ENCODE measurements at regions of chr10 and their contacts with region 1.

Region 1: DNA sequence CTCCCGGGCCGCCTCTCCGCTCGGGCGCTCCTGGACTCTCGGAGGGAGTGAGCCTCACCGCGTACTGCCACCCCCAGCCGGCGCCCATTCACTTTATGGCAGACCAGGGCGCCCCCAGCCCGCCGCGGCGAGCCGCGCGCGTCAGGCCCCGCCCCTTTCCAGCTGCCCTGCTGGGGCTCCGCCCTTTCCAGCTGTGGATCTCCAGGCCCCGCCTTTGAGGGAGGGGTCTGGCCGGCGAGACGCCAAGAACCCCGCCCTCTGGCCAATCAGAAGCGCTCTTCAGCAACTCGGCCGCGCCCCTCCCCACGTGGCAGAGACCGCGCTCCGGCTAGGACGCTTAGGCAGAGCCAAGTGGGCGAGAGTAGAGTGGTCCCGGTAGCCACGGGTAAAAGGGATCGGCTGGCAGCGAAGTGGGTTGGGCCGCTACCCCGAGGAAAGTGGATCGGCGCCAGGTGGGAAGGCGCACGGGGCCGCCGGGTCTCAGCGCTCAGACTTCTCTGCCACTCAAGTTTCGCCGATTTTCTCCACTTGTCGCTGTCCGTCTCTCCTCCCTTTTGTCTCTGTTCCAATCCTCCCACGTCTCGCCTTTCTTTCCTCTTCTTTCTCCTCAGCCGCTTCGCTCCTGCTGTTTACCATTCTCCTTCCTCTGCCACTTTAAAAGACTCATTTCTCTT is at the start of gene PITX3:
- DNase-seq: peak; percentile 96
- H3K4me3 ChIP-seq: peak within 1 kb of the TSS; percentile 31 to 63 (median 54)
- H3K27ac ChIP-seq: peak within 1 kb of the TSS in 2 of 4 donors; percentile 18 to 38
- H3K4me1 ChIP-seq: peaks cover 0 to 37% (median 35%) of the 10 kb centered on the region in 4 donors
- H3K27me3 ChIP-seq: peaks cover 0 to 8% (median 0%) of the 10 kb centered on the region in 3 donors
- CTCF ChIP-seq: no peak
- EP300 ChIP-seq: no peak
- POLR2A ChIP-seq: no peak
- total RNA-seq, gene PITX3: not detected

Region 2: GRCh38 chr10:102358712-102359382 is 117.3 kb after region 1 on chr10:
- intact Hi-C with region 1: no loop called
- DNase-seq: no peak
- H3K4me3 ChIP-seq: no peak overlapping the region
- H3K27ac ChIP-seq: no peak overlapping the region
- H3K4me1 ChIP-seq: no peaks in the 10 kb centered on the region
- H3K27me3 ChIP-seq: no peaks in the 10 kb centered on the region
- CTCF ChIP-seq: no peak
- EP300 ChIP-seq: no peak
- POLR2A ChIP-seq: no peak

Region 3: GRCh38 chr10:102426803-102427287 is 185.3 kb after region 1 on chr10:
- intact Hi-C with region 1: loop called (anchors 5 kb)
- DNase-seq: no peak
- H3K4me3 ChIP-seq: no peak overlapping the region
- H3K27ac ChIP-seq: no peak overlapping the region
- H3K4me1 ChIP-seq: peaks cover 0 to 24% (median 22%) of the 10 kb centered on the region in 4 donors
- H3K27me3 ChIP-seq: no peaks in the 10 kb centered on the region
- CTCF ChIP-seq: no peak
- EP300 ChIP-seq: no peak
- POLR2A ChIP-seq: no peak